Right cardiac atrium (tissue), 5 donors: ENCODE measurements at regions of chr4 and their contacts with region 1.

Region 1: GRCh38 chr4:69322055-69322454 is 41.8 kb downstream of the UGT2B28 start:
- DNase-seq: no peak
- ATAC-seq: no peak
- H3K4me3 ChIP-seq: no peak overlapping the region
- H3K27ac ChIP-seq: no peak overlapping the region
- H3K4me1 ChIP-seq: no peaks in the 10 kb centered on the region
- H3K27me3 ChIP-seq: no peaks in the 10 kb centered on the region

Region 2: GRCh38 chr4:69617083-69617694 is 295.1 kb after region 1 on chr4:
- intact Hi-C with region 1: loop called in 1 of 4 experiments (anchors 5 kb)
- DNase-seq: no peak
- ATAC-seq: no peak
- H3K4me3 ChIP-seq: no peak overlapping the region
- H3K27ac ChIP-seq: no peak overlapping the region
- H3K4me1 ChIP-seq: no peaks in the 10 kb centered on the region
- H3K27me3 ChIP-seq: no peaks in the 10 kb centered on the region